Activated naive CD8-positive, alpha-beta T cell treated with anti-CD3 and anti-CD28 coated beads, Interleukin-2, amount 10 ng/mL, durations not matched to agents 7 days and 5 days (primary cell): ENCODE measurements at regions of chr12 and their contacts with region 1.

Region 1: GRCh38 chr12:96399919-96400797 is at the start of gene CDK17:
- DNase-seq: peak; percentile 95
- ATAC-seq: peak; percentile 61
- H3K4me3 Mint-ChIP-seq: peak within 1 kb of the TSS; percentile 97
- H3K27ac Mint-ChIP-seq: peak within 1 kb of the TSS; percentile 99
- H3K4me1 Mint-ChIP-seq: peaks cover 33% of the 10 kb centered on the region
- H3K27me3 Mint-ChIP-seq: no peaks in the 10 kb centered on the region
- total RNA-seq, gene CDK17: 51.7 to 60.6 TPM

Region 2: DNA sequence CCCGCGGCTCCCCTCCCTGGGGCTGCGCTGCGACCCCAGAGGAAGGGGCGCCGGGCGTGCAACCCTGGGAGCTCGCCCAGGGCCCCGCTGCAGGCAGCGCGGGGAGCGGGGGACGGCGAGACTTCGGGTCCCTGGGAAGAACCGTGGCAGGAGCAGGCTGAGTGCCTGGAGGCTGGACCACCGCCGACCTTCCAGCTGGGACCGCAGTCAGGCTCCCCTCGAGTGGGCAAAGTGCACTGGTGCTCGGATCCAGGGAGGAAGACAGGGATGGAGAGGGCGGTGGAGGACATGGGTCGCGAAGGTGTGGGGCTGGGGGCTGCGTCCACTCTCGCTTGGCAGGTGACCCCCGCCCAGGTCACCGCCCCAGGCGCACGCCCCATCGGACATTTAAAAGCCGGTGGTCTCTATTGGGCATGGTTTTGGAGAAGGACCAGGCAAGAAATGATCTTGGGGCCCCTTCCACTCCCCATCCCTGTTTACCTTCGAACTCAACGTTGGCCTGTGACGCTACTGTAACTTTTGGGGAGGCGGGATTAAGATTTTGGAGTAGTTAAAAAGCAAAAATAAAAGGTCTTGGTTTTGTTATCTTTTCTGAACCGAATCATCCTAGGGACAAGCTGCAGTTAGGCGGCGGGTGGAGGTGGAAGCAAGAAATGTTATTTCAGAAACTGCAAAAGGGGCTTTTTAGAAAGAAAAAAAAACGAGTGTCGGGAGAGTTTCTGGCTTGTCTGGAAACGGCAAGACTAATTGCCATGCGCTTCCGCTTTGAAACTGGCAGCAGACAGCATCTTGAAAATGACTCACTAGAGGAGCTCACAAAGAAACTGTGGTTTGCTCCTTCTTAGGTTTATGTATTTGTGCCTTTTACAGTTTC is 204.9 kb before region 1 on chr12:
- POLR2A ChIA-PET with region 1: interaction called, 12 read pairs
- DNase-seq: peak; percentile 59
- ATAC-seq: peak; percentile 63
- H3K4me3 Mint-ChIP-seq: peak overlapping the region; percentile 93
- H3K27ac Mint-ChIP-seq: peak overlapping the region; percentile 94
- H3K4me1 Mint-ChIP-seq: peaks cover 43% of the 10 kb centered on the region
- H3K27me3 Mint-ChIP-seq: no peaks in the 10 kb centered on the region

Region 3: DNA sequence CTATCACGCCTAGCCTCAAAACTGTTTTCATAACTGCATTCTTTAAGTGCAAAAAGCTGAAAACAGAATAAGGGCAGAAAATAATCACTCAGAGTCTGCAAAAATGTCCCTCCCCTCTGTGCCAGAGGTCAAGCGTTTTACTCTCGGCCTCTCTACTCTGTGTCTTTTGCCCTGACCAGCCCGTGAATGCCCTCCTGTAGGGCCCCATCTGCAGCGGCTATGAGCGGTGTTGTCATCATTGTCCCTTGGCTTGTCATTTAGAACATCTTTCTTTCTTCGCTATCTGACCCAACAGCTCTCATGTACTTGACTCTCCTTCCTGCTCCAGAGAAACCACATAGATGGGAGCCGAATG is 184.3 kb before region 1 on chr12:
- POLR2A ChIA-PET with region 1: interaction called, 17 read pairs
- DNase-seq: no peak
- ATAC-seq: no peak
- H3K4me3 Mint-ChIP-seq: peak overlapping the region; percentile 18
- H3K27ac Mint-ChIP-seq: no peak overlapping the region
- H3K4me1 Mint-ChIP-seq: peaks cover 33% of the 10 kb centered on the region
- H3K27me3 Mint-ChIP-seq: no peaks in the 10 kb centered on the region

Region 4: GRCh38 chr12:96378319-96378718 is 21.8 kb before region 1 on chr12:
- POLR2A ChIA-PET with region 1: interaction called, 28 read pairs
- DNase-seq: no peak
- ATAC-seq: peak; percentile 2
- H3K4me3 Mint-ChIP-seq: peak overlapping the region; percentile 92
- H3K27ac Mint-ChIP-seq: peak overlapping the region; percentile 98
- H3K4me1 Mint-ChIP-seq: peaks cover 50% of the 10 kb centered on the region
- H3K27me3 Mint-ChIP-seq: no peaks in the 10 kb centered on the region

Region 5: DNA sequence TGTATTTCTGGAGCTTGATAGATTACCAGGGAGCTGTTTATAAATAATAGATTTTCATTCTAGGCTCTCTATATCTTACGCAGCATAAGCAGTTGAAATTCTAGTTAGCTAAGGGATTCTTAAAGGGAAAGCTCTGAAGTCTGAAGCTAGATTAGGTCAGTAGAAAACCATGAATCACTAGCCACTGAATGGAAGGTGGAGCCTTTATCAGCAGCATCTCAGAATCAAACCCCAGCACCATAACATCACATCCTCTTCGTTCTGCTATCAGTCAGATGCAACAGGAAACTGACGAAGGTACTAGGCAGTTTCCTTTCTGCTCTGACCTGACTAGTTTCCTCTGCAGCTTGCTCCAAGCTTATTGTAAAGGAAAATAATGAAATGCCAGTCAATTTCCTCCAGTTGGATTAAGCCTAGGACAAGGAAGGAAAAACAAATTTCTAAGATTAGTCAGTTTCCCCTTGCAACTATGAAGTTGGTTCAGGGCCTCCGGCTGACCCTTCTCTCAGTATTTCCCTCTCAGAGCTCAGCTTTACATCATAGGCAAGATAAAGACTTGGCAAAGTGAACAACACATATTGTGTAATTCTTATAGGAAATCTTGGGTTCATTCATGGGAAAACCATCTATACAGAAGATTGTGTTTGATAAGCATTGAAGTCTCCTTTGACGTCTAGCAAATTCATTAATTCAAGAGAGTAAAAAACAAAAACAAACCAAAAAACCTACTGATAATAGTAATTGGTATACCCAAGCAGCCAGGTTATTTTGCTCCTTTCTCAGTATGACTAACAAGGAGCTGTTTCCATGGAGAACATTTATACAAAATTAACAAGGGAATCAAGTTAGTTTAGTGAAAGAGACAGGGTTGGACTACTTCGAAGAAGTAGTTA is 45.8 kb after region 1 on chr12:
- POLR2A ChIA-PET with region 1: interaction called, 24 read pairs
- DNase-seq: no peak
- ATAC-seq: peak; percentile 98
- H3K4me3 Mint-ChIP-seq: peak overlapping the region; percentile 63
- H3K27ac Mint-ChIP-seq: peak overlapping the region; percentile 92
- H3K4me1 Mint-ChIP-seq: peaks cover 40% of the 10 kb centered on the region
- H3K27me3 Mint-ChIP-seq: no peaks in the 10 kb centered on the region

Region 6: DNA sequence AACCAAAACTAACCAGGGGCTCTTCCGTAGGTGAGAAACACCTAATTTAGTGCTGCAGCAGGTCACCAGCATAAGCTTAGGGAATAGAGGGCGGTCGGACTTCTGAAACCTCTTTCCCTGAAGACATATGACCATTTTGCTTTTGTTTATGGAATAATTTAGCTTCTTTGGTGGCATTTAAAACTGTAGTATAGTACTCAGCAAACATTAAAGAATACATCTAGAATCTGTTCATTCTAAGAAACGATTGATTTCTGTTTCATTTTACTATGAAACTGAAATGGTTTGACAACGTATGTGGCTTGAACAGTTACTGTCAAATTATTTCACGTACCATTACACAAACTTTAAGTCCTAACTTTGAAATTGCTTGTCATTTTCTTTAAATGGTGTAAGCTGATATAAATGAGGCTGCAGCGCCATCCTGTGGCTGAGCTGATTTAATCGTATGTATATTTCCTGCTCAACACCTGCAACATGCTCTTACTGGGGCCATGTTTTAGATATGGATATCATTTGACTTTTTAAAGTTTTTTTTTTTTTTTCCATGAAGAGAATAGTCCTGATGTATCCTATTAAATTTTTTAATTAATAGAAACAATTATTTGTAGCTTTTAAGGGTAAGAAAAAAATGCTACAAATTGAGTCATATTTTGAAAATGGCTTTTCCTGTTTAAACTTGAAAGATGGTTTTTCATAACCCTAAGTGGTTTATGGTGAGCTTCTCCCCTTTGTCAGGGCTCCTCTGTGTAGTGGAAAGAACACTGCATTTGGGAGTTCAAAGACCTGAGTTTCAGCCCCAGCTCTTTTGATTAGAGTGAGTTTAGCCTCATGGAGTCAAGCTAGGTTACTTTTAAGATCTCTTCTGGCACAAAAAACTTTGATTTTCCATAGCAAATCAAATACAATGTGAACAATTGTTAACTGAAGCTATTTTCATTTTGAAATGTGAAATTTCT is 116.6 kb after region 1 on chr12:
- POLR2A ChIA-PET with region 1: interaction called, 29 read pairs
- DNase-seq: peak; percentile 81
- ATAC-seq: peak; percentile 87
- H3K4me3 Mint-ChIP-seq: peak overlapping the region; percentile 51
- H3K27ac Mint-ChIP-seq: peak overlapping the region; percentile 70
- H3K4me1 Mint-ChIP-seq: peaks cover 18% of the 10 kb centered on the region
- H3K27me3 Mint-ChIP-seq: peaks cover 4% of the 10 kb centered on the region